MCF 10A (cell line): ENCODE measurements at regions of chr19 and their contacts with region 1.

Region 1: DNA sequence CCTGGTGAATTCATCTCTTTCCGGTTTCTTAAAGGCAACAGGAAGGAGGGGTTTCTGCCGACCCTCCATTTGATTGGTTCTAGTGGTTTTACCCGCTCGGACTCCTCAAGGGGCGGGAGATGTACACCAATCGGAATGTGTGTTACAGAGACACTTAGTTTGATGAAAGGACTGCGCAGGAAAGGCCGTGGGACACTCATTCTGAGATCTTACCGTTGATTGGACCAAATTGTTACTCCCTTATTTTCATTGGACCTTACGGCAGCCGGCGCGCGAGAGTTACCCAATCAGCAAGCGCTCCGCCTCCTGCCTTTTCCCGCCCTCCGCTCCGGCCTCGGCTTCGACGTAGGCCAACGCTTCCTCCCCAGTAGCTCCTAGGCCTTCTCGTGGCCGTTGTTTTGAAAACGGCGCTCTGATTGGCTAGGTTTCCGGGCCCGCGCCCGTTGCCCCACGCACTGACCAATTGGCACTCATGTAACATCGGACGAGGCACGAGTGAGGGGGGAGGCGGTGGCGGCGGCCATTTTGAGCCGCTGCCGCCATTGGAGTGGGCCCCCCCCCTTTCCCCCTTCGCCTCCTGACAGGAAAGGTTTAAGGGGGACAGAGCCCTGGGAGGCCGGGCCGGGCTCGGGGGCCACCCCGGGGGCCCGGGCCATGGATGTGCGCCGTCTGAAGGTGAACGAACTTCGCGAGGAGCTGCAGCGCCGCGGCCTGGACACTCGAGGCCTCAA is at the start of gene HNRNPUL1:
- DNase-seq: peak; percentile 100
- H3K4me3 Mint-ChIP-seq: peak within 1 kb of the TSS; percentile 89
- H3K27ac Mint-ChIP-seq: peak within 1 kb of the TSS; percentile 100
- H3K4me1 Mint-ChIP-seq: peaks cover 42% of the 10 kb centered on the region
- H3K27me3 Mint-ChIP-seq: no peaks in the 10 kb centered on the region
- CTCF ChIP-seq: peak; percentile 25
- total RNA-seq, gene HNRNPUL1: 179 and 204 TPM in 2 replicates

Region 2: DNA sequence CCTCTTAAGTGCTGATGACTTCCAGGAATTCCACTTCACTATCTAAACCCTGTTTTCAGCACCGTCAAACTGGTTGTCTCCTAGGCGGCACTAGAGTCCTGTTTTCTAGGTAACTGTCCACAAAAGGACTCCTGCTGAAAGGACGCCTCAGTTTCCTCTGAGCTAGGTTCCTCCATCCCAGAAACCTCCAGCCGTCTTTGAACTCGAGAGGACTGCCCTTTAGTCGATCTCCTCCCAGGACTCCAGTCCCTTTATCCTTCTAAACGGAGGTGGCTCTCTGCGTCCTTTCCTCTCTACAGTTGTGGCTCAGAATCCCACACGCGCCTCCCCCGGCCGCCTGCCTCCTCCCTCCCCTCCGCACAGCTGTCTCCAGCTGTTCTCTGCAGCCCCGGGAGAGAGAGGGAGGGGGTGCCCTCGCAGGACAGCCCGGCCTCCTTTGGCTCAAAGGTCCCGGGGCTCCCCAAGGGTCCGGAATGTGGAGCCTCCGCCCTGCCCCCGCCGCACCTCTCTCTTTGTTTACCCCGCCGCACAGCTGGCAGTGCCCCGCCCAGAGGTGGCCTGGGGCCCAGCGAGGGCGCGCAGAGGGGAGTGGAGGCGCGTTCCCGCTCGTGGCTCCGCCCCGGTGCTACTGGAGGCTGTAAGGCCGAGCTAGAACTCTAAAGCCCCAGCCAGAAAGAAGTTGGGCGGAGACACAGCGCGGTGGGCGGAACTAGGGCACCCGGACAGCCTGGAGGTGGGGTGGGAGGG is 660.5 kb before region 1 on chr19:
- CTCF ChIA-PET with region 1: no interaction called
- POLR2A ChIA-PET with region 1: interaction called, 18 read pairs
- intact Hi-C with region 1: no loop called
- DNase-seq: peak; percentile 99
- H3K4me3 Mint-ChIP-seq: peak overlapping the region; percentile 79
- H3K27ac Mint-ChIP-seq: peak overlapping the region; percentile 69
- H3K4me1 Mint-ChIP-seq: peaks cover 47% of the 10 kb centered on the region
- H3K27me3 Mint-ChIP-seq: no peaks in the 10 kb centered on the region
- CTCF ChIP-seq: no peak

Region 3: DNA sequence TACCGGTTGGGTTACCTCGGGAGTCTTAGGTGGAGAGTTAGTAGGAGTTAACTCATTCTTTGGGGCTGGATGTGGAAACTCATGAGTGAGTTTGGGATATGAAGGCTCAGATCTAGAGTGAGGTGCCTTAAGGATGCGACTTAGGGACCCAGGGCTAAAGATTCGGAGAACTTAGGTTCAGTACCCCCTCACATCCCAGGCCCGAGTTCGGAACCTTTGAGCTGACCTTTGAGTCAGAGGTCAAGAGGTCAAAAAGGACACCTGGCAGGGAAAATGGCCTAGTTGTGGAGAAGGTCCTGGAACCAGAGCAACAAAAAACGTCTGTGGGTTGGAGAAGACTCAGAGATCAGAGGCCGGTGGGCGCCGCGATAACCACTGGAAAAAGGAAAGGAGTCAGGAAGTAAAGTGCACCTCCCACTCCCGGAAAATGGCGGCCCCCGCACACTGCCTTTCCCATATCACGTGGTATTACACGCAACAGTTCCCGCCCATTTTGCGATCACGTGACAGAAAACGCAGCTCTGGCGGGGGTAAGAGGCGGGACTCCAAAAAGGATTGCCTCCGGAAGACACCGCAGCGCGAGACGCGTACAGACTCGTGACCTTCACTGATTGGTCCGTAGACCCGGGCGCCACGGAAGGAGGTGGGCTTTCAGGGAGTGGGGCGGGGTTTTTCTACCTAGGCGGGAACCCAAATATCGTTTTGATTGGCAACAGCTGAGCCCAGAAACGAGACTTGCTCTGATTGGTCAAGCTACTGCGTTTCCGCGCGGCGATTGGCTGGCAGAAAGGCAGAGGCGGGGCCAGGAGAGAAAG is 513.7 kb before region 1 on chr19 and contains the start of gene ACTMAP:
- CTCF ChIA-PET with region 1: no interaction called
- POLR2A ChIA-PET with region 1: interaction called, 27 read pairs
- intact Hi-C with region 1: no loop called
- DNase-seq: peak; percentile 100
- H3K4me3 Mint-ChIP-seq: peak within 1 kb of the TSS; percentile 92
- H3K27ac Mint-ChIP-seq: peak within 1 kb of the TSS; percentile 91
- H3K4me1 Mint-ChIP-seq: peaks cover 31% of the 10 kb centered on the region
- H3K27me3 Mint-ChIP-seq: no peaks in the 10 kb centered on the region
- CTCF ChIP-seq: no peak
- total RNA-seq, gene ACTMAP: 19.3 and 21.2 TPM in 2 replicates

Region 4: GRCh38 chr19:41218615-41219507 is 45.2 kb before region 1 on chr19 and contains the start of gene AXL:
- CTCF ChIA-PET with region 1: interaction called, 30 read pairs
- POLR2A ChIA-PET with region 1: interaction called, 345 read pairs
- intact Hi-C with region 1: loop called (anchors 2 kb)
- DNase-seq: peak; percentile 92
- H3K4me3 Mint-ChIP-seq: peak within 1 kb of the TSS; percentile 78
- H3K27ac Mint-ChIP-seq: peak within 1 kb of the TSS; percentile 96
- H3K4me1 Mint-ChIP-seq: peaks cover 48% of the 10 kb centered on the region
- H3K27me3 Mint-ChIP-seq: no peaks in the 10 kb centered on the region
- CTCF ChIP-seq: no peak
- total RNA-seq, gene AXL: 136 and 165 TPM in 2 replicates

Region 5: GRCh38 chr19:41327576-41328156 is 63.7 kb after region 1 on chr19:
- CTCF ChIA-PET with region 1: no interaction called
- POLR2A ChIA-PET with region 1: interaction called, 14 read pairs
- intact Hi-C with region 1: no loop called
- DNase-seq: peak; percentile 92
- H3K4me3 Mint-ChIP-seq: peak overlapping the region; percentile 71
- H3K27ac Mint-ChIP-seq: peak overlapping the region; percentile 41
- H3K4me1 Mint-ChIP-seq: peaks cover 54% of the 10 kb centered on the region
- H3K27me3 Mint-ChIP-seq: no peaks in the 10 kb centered on the region
- CTCF ChIP-seq: no peak

Region 6: DNA sequence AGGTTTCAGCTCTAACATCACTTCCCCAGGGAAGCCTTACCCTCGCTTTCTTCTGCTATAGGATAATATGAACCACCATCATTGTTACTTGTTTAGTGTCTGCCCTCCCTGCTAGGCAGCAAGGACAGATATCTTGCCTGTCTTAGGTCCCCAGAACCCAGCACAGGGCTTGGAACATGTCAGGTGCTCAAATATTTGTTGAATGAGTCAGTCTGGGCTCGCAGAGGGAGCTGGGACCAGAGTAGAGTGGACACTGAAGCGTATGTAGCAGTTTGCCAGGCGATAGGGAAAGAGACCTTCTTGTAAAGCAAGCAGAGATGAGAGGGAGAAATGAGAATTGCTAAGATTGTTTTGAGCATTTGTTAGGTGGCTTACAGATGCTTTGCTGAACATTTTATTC is 145.3 kb after region 1 on chr19:
- CTCF ChIA-PET with region 1: no interaction called
- POLR2A ChIA-PET with region 1: no interaction called
- intact Hi-C with region 1: no loop called
- DNase-seq: peak; percentile 71
- H3K4me3 Mint-ChIP-seq: peak overlapping the region; percentile 13
- H3K27ac Mint-ChIP-seq: peak overlapping the region; percentile 87
- H3K4me1 Mint-ChIP-seq: peaks cover 19% of the 10 kb centered on the region
- H3K27me3 Mint-ChIP-seq: no peaks in the 10 kb centered on the region
- CTCF ChIP-seq: no peak

Region 7: DNA sequence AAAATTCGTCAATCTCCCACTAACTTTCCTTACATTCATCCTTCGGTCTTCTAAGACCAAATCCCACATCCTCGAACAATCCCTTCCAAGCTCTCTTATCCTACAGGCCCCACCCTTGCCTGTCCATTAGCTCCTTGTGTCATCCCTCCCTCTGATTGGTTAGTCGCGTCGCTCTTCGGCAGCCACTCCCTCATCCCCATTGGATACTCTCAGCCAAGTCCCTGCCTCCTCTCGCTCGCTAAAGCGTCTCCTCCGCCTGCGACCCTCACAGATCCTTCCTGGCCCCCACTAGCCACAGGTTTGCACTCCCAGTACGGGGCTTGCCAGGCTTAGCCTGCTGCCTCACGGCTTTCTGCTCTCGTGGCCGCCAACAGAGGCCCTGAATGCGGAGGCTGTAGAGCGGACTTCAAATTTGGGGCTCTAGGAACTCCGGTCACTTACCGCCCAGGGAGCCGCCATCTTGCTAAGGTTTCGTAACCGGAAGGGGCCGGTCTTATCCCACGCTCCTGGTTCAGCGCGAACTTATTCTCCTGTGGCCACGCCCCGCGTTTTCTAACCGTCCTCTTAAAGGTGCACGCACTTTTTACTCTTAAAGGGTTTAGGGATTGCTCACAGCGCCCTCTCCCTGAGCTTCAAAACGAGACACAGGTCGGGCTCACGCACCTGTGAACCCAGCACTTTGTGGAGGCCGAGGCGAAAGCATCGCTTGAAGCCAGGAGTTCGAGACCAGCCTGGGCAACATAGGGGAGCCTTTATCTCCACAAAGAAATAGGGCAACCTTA is 175.6 kb after region 1 on chr19 and contains the start of gene DMAC2:
- CTCF ChIA-PET with region 1: interaction called, 4 read pairs
- POLR2A ChIA-PET with region 1: interaction called, 12 read pairs
- intact Hi-C with region 1: no loop called
- DNase-seq: peak; percentile 100
- H3K4me3 Mint-ChIP-seq: no peak within 1 kb of the TSS
- H3K27ac Mint-ChIP-seq: peak within 1 kb of the TSS; percentile 39
- H3K4me1 Mint-ChIP-seq: peaks cover 13% of the 10 kb centered on the region
- H3K27me3 Mint-ChIP-seq: peaks cover 20% of the 10 kb centered on the region
- CTCF ChIP-seq: peak; percentile 30
- total RNA-seq, gene DMAC2: 27.7 and 34.8 TPM in 2 replicates